Right lobe of liver (tissue), 6 donors: ENCODE measurements at regions of chr12 and their contacts with region 1.

Region 1: DNA sequence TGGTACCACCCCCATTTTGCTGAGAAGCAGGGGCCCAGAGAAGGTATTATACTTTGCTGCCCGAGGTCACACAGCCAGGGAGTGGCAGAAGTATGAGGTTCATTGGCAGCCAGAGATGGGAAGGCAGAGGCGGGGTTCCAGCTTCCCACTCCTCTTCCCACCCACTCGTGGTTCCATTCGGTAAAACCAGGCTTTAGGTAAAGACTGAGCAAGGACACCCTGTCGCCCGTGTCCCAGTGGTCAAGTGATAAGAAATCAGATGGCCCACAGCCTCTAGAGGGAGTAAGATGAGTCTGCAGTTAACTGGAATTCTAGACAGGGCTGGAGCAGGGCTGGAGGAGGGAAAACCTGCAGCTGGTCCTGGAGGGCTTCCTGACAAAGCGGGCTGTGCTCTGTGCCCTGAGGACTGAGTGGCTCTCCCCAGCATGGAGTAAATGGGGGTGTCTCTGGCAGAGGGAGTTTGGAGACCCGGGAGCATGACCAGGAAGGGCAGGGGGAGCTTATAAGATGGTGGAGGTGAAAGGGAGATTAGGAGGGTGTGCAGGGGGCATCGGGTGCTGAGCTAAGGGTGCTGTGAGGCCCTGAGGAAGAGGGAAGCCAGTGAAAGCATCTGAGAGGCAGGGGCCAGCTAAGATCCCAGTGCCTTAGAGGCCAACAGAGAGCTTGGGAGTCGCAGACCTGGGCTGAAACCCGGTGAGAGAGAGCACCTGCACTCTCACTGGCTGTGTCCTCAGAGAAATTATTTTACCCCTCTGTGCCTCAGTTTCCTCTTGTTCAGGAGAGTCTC is 5.8 kb downstream of the FAM222A start:
- DNase-seq: no peak
- ATAC-seq: no peak
- H3K4me3 ChIP-seq: no peak overlapping the region
- H3K27ac ChIP-seq: no peak overlapping the region
- H3K4me1 ChIP-seq: peaks cover 0 to 67% (median 31%) of the 10 kb centered on the region in 4 donors
- H3K27me3 ChIP-seq: no peaks in the 10 kb centered on the region
- CTCF ChIP-seq: peak in 2 of 4 donors; percentile 21 to 23
- POLR2A ChIP-seq: no peak

Region 2: GRCh38 chr12:109597795-109598427 is 121.5 kb before region 1 on chr12:
- intact Hi-C with region 1: loop called in 1 of 2 experiments (anchors 5 kb)
- DNase-seq: peak; percentile 90 to 91 (median 91)
- ATAC-seq: peak; percentile 94 to 98 (median 96)
- H3K4me3 ChIP-seq: no peak overlapping the region
- H3K27ac ChIP-seq: no peak overlapping the region
- H3K4me1 ChIP-seq: peaks cover 0 to 14% (median 2%) of the 10 kb centered on the region in 4 donors
- H3K27me3 ChIP-seq: no peaks in the 10 kb centered on the region
- CTCF ChIP-seq: peak; percentile 95 to 98 (median 96)
- POLR2A ChIP-seq: no peak

Region 3: DNA sequence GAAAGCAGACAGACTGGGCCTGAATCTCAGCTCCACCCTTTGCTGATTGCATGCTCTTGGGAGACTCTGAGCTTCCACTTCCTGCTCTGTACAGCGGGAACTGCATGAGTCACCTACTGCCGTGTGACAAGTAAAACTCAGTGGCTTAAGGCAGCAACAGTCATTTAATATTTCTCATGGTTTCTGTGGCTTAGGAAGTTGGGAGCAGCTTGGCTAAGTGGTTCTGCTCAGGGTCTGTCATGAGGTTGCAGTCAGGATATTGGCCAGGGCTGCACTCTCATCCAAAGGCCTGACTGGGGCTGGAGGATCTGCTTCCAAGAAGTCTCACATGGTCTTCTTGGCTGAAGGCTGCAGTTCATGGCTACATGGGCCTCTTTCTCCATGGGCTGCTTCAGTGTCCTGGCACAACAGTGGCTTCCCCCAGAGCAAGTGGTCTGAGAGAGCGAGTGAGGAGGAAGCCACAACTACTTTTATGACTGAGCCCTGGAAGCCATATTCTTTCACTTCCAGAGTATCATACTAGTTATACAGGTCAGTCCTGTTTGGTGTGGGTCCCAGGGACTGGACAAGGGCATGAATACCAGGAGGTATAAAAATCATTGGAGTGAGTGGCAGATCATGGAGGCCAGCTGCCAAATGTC is 43.9 kb after region 1 on chr12:
- intact Hi-C with region 1: loop called in 1 of 2 experiments (anchors 5 kb)
- DNase-seq: no peak
- ATAC-seq: peak in 3 of 4 donors; percentile 7 to 46 (median 20)
- H3K4me3 ChIP-seq: no peak overlapping the region
- H3K27ac ChIP-seq: no peak overlapping the region
- H3K4me1 ChIP-seq: peaks cover 0 to 11% (median 3%) of the 10 kb centered on the region in 4 donors
- H3K27me3 ChIP-seq: no peaks in the 10 kb centered on the region
- CTCF ChIP-seq: no peak
- POLR2A ChIP-seq: no peak